ENCODE measurements at regions of chr5 and their contacts with region 1.

Region 1: DNA sequence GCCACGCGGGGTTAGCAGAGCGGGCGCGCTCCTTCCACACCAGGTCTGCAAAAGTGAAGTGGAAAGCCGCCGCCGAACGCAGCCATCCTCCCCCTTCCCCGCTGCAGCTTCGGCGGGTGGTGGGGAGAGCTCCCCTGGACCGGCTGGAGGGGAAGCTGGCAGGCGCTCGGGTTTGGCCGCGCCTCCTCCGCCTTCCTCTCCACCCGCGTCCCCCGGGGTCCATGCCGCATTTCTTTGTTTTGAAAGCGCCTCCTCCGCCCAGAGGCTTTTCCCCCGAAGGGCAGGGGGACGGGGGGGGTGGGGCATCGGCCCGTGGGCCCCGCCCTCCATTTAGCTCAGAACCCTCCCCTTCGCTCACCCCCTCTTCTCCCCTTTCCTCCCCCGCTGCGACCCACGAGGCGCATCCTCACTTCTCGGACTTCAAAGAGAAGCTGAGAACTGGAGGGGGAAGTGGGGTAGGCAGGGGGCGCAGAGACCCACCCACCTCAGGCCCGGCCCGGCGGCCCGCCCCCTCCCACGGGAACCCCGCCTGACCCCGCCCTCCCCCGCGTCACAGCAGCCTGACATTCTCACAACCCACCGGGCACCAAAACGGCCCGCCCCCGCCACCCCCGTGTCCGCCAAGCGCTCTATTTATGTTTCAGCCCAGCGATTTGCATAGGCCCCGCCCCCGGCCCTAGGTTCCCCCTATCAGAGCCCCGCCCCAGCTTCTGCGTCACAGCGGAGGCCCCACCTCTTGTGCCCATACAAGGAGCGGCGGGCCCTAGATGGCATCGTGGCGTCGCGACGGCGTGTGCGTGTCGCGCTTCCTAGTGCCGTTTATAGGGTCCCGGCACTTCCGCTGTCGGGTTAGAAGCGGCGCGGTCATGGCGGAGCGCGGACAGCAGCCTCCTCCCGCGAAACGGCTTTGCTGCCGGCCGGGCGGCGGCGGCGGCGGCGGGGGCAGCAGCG is at the start of gene ZSWIM6:
- DNase-seq: peak; percentile 99
- H3K4me3 Mint-ChIP-seq: peak within 1 kb of the TSS; percentile 94
- H3K27ac Mint-ChIP-seq: peak within 1 kb of the TSS; percentile 97
- H3K4me1 Mint-ChIP-seq: peaks cover 42% of the 10 kb centered on the region
- H3K27me3 Mint-ChIP-seq: peaks cover 48% of the 10 kb centered on the region
- total RNA-seq, gene ZSWIM6: 7.4 and 7.9 TPM in 2 replicates

Region 2: GRCh38 chr5:60699530-60700382 is 631.9 kb before region 1 on chr5 and contains the start of gene DEPDC1B:
- intact Hi-C with region 1: loop called (anchors 1 kb)
- DNase-seq: peak; percentile 97
- H3K4me3 Mint-ChIP-seq: peak within 1 kb of the TSS; percentile 91
- H3K27ac Mint-ChIP-seq: peak within 1 kb of the TSS; percentile 93
- H3K4me1 Mint-ChIP-seq: peaks cover 28% of the 10 kb centered on the region
- H3K27me3 Mint-ChIP-seq: peaks cover 23% of the 10 kb centered on the region
- total RNA-seq, gene DEPDC1B: 19.8 and 20.5 TPM in 2 replicates

Region 3: GRCh38 chr5:60944904-60945812 is 386.5 kb before region 1 on chr5 and contains the starts of genes ERCC8 and NDUFAF2:
- intact Hi-C with region 1: loop called (anchors 5 kb)
- DNase-seq: peak; percentile 96
- H3K4me3 Mint-ChIP-seq: no peak within 1 kb of the TSS
- H3K27ac Mint-ChIP-seq: no peak within 1 kb of the TSS
- H3K4me1 Mint-ChIP-seq: peaks cover 16% of the 10 kb centered on the region
- H3K27me3 Mint-ChIP-seq: no peaks in the 10 kb centered on the region
- total RNA-seq, gene ERCC8: 10.7 and 10.8 TPM in 2 replicates
- total RNA-seq, gene NDUFAF2: 38.0 and 39.5 TPM in 2 replicates

Region 4: GRCh38 chr5:61200582-61201155 is 131.0 kb before region 1 on chr5:
- intact Hi-C with region 1: loop called (anchors 1 kb)
- DNase-seq: no peak
- H3K4me3 Mint-ChIP-seq: no peak overlapping the region
- H3K27ac Mint-ChIP-seq: no peak overlapping the region
- H3K4me1 Mint-ChIP-seq: peaks cover 6% of the 10 kb centered on the region
- H3K27me3 Mint-ChIP-seq: peaks cover 10% of the 10 kb centered on the region

Region 5: GRCh38 chr5:61306511-61307131 is 25.1 kb before region 1 on chr5:
- intact Hi-C with region 1: loop called (anchors 1 kb)
- DNase-seq: peak; percentile 76
- H3K4me3 Mint-ChIP-seq: peak overlapping the region; percentile 9
- H3K27ac Mint-ChIP-seq: peak overlapping the region; percentile 86
- H3K4me1 Mint-ChIP-seq: peaks cover 16% of the 10 kb centered on the region
- H3K27me3 Mint-ChIP-seq: peaks cover 3% of the 10 kb centered on the region

Region 6: DNA sequence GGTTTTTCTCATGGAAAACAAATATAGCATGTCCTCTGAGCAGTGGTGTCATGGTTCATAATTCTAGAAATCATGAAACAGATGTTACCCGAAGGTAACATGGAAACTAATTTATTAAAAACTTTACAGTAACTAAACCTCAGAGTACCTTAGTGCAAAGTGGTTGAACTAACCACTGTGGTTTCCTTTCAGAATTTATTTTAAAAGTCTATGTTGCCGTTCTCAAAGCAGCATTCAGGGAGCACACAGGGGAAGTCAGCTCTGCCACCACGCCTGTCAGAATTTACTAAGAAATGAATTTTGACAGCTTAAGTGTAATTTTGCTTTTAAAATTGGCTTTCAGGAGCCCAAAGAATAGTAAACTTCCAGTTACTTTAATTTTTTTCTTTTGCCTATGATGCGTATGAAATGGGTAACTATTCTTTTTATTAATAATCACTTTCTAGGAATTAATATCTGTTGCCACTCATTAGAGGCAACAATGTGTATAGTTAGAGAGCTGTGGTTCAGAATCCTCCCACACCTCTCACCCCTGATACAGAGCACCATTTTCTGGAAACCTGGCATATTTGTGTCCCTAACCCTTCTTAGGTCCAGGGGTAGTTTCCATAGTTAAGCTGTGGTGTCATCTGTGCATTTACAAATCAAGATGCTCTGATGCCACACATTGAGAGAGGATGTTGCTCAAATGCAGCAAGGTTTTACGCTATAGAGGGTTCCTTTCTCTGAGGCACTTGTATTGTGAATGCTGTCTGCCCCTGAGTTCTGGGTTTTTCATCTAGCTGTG is 203.0 kb after region 1 on chr5:
- intact Hi-C with region 1: loop called (anchors 2 kb)
- DNase-seq: peak; percentile 69
- H3K4me3 Mint-ChIP-seq: no peak overlapping the region
- H3K27ac Mint-ChIP-seq: peak overlapping the region; percentile 42
- H3K4me1 Mint-ChIP-seq: peaks cover 11% of the 10 kb centered on the region
- H3K27me3 Mint-ChIP-seq: no peaks in the 10 kb centered on the region

Region 7: GRCh38 chr5:61641747-61642578 is 310.3 kb after region 1 on chr5:
- intact Hi-C with region 1: no loop called
- DNase-seq: no peak
- H3K4me3 Mint-ChIP-seq: no peak overlapping the region
- H3K27ac Mint-ChIP-seq: no peak overlapping the region
- H3K4me1 Mint-ChIP-seq: no peaks in the 10 kb centered on the region
- H3K27me3 Mint-ChIP-seq: peaks cover 2% of the 10 kb centered on the region

Region 8: DNA sequence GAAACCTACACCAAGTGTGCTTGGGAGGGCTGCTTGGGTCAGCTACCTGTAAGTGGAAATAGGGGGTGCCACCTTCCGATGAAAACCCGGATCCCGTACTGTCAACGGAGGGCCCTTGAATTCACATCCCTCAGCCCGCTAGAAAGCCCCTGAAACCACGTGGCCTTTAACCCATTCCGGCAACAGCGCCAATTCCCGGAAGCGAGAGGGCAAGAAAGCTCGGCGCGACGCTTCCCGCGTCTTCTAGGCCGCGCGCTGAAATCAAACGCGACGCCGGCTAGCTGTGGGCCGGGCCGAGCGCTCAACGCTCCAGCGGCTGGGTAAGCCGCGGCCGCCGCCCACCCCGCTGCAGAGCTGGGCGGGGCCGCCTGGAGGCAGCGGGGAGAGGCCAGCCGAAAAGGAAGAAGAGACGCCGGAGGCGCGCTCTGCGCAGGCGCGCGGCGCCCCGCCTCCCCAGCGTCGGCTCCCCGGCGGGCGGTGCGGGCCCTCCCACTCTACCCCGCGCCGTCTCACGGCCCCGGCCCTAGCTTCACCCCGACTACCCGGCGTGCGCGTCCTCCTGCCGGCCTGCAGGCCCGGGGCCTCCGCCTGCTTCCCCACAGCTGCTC is 974.1 kb after region 1 on chr5 and contains the start of gene KIF2A:
- intact Hi-C with region 1: loop called (anchors 5 kb)
- DNase-seq: peak; percentile 98
- H3K4me3 Mint-ChIP-seq: peak within 1 kb of the TSS; percentile 100
- H3K27ac Mint-ChIP-seq: peak within 1 kb of the TSS; percentile 100
- H3K4me1 Mint-ChIP-seq: peaks cover 51% of the 10 kb centered on the region
- H3K27me3 Mint-ChIP-seq: no peaks in the 10 kb centered on the region
- total RNA-seq, gene KIF2A: 238 and 244 TPM in 2 replicates